ENCODE measurements at regions of chrX and their contacts with region 1.

Region 1: GRCh38 chrX:19535476-19535875 is 20.2 kb upstream of the MAP3K15 start:
- DNase-seq: no peak
- H3K4me3 ChIP-seq: no peak overlapping the region
- H3K27ac ChIP-seq: no peak overlapping the region
- H3K27me3 ChIP-seq: no peaks in the 10 kb centered on the region
- CTCF ChIP-seq: peak; percentile 51

Region 2: DNA sequence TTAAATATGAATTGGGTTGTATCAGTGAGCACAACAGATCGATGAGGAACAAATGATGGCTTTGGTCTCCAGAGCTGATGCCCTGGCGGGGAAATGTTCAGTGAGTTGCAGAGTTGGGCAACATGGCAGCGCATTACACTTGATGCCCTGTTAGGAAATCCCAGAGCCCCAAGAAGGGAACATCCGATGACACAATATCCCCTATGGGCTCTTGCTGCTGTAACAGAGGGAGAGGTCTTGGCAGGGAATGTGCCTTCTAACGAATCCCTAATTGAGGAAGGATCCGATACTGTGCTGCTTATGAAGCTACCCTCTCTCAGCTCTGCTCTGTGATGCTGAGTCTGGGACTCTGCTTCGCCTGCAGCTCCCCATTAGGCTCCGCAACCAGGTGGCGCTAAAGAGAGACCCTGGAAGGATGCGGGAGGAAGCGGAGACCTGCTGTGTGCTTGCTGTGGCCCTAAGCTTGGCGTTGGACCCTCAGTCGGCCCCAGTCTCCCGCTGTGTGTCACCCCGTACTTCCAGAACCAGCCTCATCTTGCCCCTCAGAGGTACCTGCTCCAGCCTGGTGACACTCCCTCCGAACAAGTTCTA is 152.8 kb before region 1 on chrX:
- CTCF ChIA-PET with region 1: interaction called, 28 read pairs
- POLR2A ChIA-PET with region 1: no interaction called
- DNase-seq: no peak
- H3K4me3 ChIP-seq: no peak overlapping the region
- H3K27ac ChIP-seq: no peak overlapping the region
- H3K27me3 ChIP-seq: no peaks in the 10 kb centered on the region
- CTCF ChIP-seq: peak; percentile 66

Region 3: GRCh38 chrX:19563746-19564145 is 28.3 kb after region 1 on chrX:
- CTCF ChIA-PET with region 1: no interaction called
- POLR2A ChIA-PET with region 1: no interaction called
- DNase-seq: no peak
- H3K4me3 ChIP-seq: no peak overlapping the region
- H3K27ac ChIP-seq: no peak overlapping the region
- H3K27me3 ChIP-seq: no peaks in the 10 kb centered on the region
- CTCF ChIP-seq: no peak

Measured in AG04450 (cell line).